HCT116 (cell line): ENCODE measurements at regions of chr20 and their contacts with region 1.

Region 1: GRCh38 chr20:41738604-41739206 is 120.5 kb upstream of the CHD6 start:
- DNase-seq: peak; percentile 32
- ATAC-seq: peak; percentile 84
- H3K4me3 ChIP-seq: no peak overlapping the region
- H3K27ac ChIP-seq: no peak overlapping the region
- H3K4me1 ChIP-seq: no peaks in the 10 kb centered on the region
- H3K27me3 ChIP-seq: peaks cover 4% of the 10 kb centered on the region; the same call in 1 of the 2 replicates
- CTCF ChIP-seq: peak; percentile 47 to 95 (median 90); a peak in 5 of 6 replicates
- POLR2A ChIP-seq: no peak
- RAD21 ChIP-seq: peak; percentile 75

Region 2: DNA sequence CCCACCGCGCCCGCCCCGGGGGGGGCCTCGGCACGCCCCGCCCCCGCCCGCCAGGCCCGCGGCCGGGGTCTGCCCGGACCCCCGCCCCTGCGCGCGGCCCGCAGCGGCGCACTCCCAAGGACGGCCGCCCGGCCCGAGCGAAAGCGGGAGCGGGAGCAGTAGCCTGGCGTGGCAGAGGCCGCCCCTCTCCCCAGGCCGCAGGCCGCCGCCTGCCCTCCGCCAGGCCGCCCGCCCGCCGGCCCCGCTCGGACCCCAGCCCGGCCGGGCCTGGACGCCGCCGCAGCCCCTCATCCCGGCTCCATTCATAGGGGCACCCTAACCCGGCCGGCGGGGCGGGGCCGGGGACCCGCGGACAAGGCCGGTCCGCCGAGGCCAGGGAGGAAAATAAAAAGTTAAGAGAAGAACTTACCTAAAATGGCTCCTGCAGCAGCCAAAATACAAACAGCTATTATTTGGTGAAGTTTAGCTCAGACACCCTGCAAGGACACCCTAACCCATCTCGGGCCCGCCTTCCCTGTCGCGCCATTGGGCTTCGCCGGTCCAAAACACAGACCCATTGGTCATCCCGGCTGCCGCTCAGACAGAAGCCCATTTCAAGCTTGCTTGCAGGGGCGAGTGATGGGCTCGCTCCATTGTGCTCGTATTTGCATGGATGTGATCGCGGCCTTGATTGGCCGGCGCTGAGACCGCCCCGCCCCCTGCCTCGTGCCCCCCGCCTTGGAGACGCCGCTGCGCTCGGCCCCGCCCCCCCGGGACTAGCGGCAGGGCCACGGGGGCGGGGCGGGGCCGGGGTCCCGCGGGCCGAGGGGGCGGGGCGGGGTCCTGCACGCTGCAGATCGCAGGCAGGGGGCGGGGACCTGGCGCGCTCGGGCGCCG is 120.5 kb before region 1 on chr20 and contains the start of gene CHD6:
- CTCF ChIA-PET with region 1: no interaction called
- POLR2A ChIA-PET with region 1: no interaction called
- RAD21 ChIA-PET with region 1: no interaction called
- intact Hi-C with region 1: no loop called
- DNase-seq: peak; percentile 97
- ATAC-seq: peak; percentile 98
- H3K4me3 ChIP-seq: peak within 1 kb of the TSS; percentile 69 to 76
- H3K27ac ChIP-seq: peak within 1 kb of the TSS; percentile 87
- H3K4me1 ChIP-seq: peaks cover 6 to 11% of the 10 kb centered on the region in 2 experiments; a peak in 3 of 4 replicates
- H3K27me3 ChIP-seq: no peaks in the 10 kb centered on the region
- CTCF ChIP-seq: no peak
- POLR2A ChIP-seq: no peak
- RAD21 ChIP-seq: no peak
- total RNA-seq, gene CHD6: 26.6 TPM

Region 3: DNA sequence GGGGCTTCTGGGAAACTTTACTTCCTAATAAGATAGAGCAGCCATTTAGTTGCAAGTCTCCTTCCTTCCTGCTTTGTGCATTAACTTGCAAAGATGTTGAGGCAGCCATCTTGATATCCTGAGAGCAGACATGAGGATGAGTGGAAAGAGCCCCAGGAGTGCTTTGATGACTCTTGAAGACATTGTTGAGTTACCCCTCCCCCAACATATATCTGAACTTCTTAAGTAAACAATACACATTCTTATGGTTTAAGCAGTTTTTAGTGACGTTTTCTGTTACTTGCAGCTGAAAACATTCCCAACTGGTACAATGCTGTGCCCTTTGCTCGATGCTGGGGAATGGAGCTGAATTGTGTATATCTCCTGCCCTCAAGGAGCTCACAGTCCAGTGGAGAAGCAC is 16.5 kb before region 1 on chr20:
- CTCF ChIA-PET with region 1: interaction called, 10 read pairs
- POLR2A ChIA-PET with region 1: no interaction called
- RAD21 ChIA-PET with region 1: no interaction called
- intact Hi-C with region 1: no loop called
- DNase-seq: no peak
- ATAC-seq: no peak
- H3K4me3 ChIP-seq: no peak overlapping the region
- H3K27ac ChIP-seq: no peak overlapping the region
- H3K4me1 ChIP-seq: no peaks in the 10 kb centered on the region
- H3K27me3 ChIP-seq: no peaks in the 10 kb centered on the region
- CTCF ChIP-seq: no peak
- POLR2A ChIP-seq: no peak
- RAD21 ChIP-seq: no peak

Region 4: GRCh38 chr20:41837669-41838224 is 99.0 kb after region 1 on chr20:
- CTCF ChIA-PET with region 1: no interaction called
- POLR2A ChIA-PET with region 1: no interaction called
- RAD21 ChIA-PET with region 1: no interaction called
- intact Hi-C with region 1: no loop called
- DNase-seq: no peak
- ATAC-seq: no peak
- H3K4me3 ChIP-seq: no peak overlapping the region
- H3K27ac ChIP-seq: no peak overlapping the region
- H3K4me1 ChIP-seq: no peaks in the 10 kb centered on the region
- H3K27me3 ChIP-seq: peaks cover 7% of the 10 kb centered on the region; the same call in 1 of the 2 replicates
- CTCF ChIP-seq: no peak
- POLR2A ChIP-seq: no peak
- RAD21 ChIP-seq: no peak

Region 5: GRCh38 chr20:42527262-42527661 is 788.6 kb after region 1 on chr20:
- CTCF ChIA-PET with region 1: no interaction called
- POLR2A ChIA-PET with region 1: no interaction called
- RAD21 ChIA-PET with region 1: no interaction called
- intact Hi-C with region 1: loop called (anchors 10 kb)
- DNase-seq: no peak
- ATAC-seq: no peak
- H3K4me3 ChIP-seq: no peak overlapping the region
- H3K27ac ChIP-seq: no peak overlapping the region
- H3K4me1 ChIP-seq: no peaks in the 10 kb centered on the region
- H3K27me3 ChIP-seq: no peaks in the 10 kb centered on the region
- CTCF ChIP-seq: no peak
- POLR2A ChIP-seq: no peak
- RAD21 ChIP-seq: no peak

Region 6: DNA sequence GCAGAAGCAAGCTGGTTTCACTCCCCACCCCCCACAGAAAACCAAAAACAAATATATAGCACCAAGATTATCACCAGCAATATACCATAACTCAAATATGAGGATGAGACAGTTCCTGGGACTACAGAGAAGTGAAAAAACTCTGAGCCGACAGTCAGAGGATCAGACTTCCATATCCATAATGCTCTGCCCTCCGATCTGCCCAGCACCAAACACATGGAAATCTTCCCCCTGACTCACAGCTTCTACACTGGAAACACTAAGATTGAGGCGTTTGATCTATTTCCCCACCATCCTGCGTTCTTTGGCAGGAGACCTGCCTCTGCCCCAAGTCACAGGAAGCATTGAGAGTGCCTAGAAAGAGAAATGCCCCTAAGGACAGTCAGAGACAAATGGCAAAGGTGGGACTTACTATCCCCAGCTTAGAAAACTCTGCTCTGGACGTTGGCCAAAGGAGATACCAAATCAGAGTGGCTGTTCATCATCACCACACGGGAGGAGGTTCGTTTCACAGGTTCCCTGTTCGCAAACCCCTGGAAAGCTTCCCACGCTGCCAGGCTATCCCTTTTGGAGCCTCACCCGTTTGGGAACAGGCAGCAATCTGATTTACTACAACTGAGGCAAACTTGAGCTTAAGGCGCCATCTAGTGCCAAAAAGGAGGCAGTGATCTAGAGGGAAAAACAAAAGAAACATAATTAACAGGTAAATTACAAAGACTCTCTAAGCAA is 1670.3 kb after region 1 on chr20:
- CTCF ChIA-PET with region 1: interaction called, 17 read pairs
- POLR2A ChIA-PET with region 1: no interaction called
- RAD21 ChIA-PET with region 1: no interaction called
- intact Hi-C with region 1: loop called (anchors 1 kb)
- DNase-seq: peak; percentile 51
- ATAC-seq: peak; percentile 86
- H3K4me3 ChIP-seq: no peak overlapping the region
- H3K27ac ChIP-seq: no peak overlapping the region
- H3K4me1 ChIP-seq: 0 out of 4 replicates have a peak, but pooled peaks cover 0 to 3% of the 10 kb centered on the region in 2 experiments
- H3K27me3 ChIP-seq: no peaks in the 10 kb centered on the region; the same call in 1 of the 2 replicates
- CTCF ChIP-seq: peak; percentile 56 to 94 (median 78); a peak in 5 of 6 replicates
- POLR2A ChIP-seq: no peak
- RAD21 ChIP-seq: peak; percentile 84